PC-3 (cell line): ENCODE measurements at regions of chr20 and their contacts with region 1.

Region 1: DNA sequence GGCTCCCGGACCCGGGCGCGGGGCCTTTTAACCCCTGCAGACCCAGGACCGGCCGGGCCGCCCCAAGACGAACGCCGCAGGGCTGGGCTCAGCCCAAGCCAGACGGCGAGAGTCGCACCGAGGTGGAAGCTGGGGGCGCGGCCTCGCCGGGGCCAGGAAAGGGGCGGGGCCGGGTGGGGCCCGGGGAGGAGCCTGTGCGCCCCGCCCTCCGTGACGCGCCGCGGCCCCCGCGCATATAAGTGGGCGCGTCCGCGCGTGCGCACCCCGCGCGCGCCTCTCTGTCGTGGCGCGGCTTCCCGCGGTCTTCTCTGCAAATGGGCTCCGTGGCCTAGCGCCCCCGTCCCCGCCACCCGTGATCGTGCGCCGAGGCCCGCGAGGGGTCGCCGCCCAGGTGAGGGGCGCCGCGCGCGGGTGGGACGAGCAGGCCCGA is at the start of gene PPDPF:
- DNase-seq: peak; percentile 84
- ATAC-seq: peak; percentile 70
- H3K4me3 ChIP-seq: peak within 1 kb of the TSS; percentile 99
- H3K27ac ChIP-seq: peak within 1 kb of the TSS; percentile 75
- H3K4me1 ChIP-seq: peaks cover 13% of the 10 kb centered on the region
- H3K27me3 ChIP-seq: no peaks in the 10 kb centered on the region
- CTCF ChIP-seq: no peak
- total RNA-seq, gene PPDPF: 245 and 256 TPM in 2 replicates

Region 2: GRCh38 chr20:63044605-63045004 is 475.9 kb before region 1 on chr20:
- CTCF ChIA-PET with region 1: no interaction called
- POLR2A ChIA-PET with region 1: interaction called, 12 read pairs
- intact Hi-C with region 1: no loop called
- DNase-seq: no peak
- ATAC-seq: no peak
- H3K4me3 ChIP-seq: no peak overlapping the region
- H3K27ac ChIP-seq: no peak overlapping the region
- H3K4me1 ChIP-seq: no peaks in the 10 kb centered on the region
- H3K27me3 ChIP-seq: peaks cover 74% of the 10 kb centered on the region
- CTCF ChIP-seq: no peak

Region 3: GRCh38 chr20:63425846-63426485 is 94.6 kb before region 1 on chr20:
- CTCF ChIA-PET with region 1: no interaction called
- POLR2A ChIA-PET with region 1: interaction called, 15 read pairs
- intact Hi-C with region 1: no loop called
- DNase-seq: peak; percentile 18
- ATAC-seq: no peak
- H3K4me3 ChIP-seq: no peak overlapping the region
- H3K27ac ChIP-seq: no peak overlapping the region
- H3K4me1 ChIP-seq: no peaks in the 10 kb centered on the region
- H3K27me3 ChIP-seq: peaks cover 32% of the 10 kb centered on the region
- CTCF ChIP-seq: peak; percentile 28

Region 4: DNA sequence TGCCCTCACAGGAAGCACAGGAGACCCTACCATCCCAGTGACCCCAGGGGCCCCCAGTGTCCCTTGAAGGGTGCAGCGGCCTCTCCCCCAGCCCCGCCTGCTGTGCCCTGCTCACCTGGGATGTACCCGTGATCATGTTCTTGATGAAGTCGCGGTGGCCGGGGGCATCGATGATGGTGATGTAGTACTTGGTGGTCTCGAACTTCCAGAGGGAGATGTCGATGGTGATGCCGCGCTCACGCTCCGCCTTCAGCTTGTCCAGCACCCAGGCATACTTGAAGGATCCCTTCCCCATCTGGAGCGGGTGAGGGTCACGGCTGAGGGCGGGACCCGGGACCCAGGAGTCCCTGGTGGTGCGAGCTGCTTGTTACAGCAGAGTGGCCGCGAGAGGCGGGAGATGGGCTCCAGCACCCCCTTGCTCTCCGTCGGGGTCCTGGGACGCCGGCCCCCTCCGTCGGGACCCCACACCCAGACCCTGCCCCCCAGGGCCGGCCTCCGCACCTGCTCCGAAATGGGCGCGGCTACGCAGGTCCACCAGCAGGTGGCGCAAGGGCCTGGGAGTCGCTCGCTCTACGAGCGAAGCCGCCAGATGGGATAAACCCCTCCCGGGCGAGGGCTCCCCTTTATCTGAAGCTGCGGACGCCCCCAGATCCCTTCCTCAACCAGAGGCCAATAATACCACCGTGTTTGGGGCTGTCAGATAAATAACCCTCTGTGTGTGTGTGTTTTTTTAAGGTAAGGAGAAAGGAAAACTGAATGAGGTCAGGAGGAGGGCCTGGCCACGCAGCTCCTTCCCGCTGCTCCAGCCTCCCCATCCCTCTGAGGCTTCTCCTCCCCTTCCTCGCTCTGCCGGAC is 24.6 kb before region 1 on chr20:
- CTCF ChIA-PET with region 1: interaction called, 21 read pairs
- POLR2A ChIA-PET with region 1: interaction called, 6 read pairs
- intact Hi-C with region 1: no loop called
- DNase-seq: peak; percentile 51
- ATAC-seq: peak; percentile 15
- H3K4me3 ChIP-seq: no peak overlapping the region
- H3K27ac ChIP-seq: no peak overlapping the region
- H3K4me1 ChIP-seq: peaks cover 14% of the 10 kb centered on the region
- H3K27me3 ChIP-seq: no peaks in the 10 kb centered on the region
- CTCF ChIP-seq: peak; percentile 90

Region 5: GRCh38 chr20:63641792-63642544 is 121.4 kb after region 1 on chr20:
- CTCF ChIA-PET with region 1: no interaction called
- POLR2A ChIA-PET with region 1: interaction called, 23 read pairs
- intact Hi-C with region 1: no loop called
- DNase-seq: peak; percentile 92
- ATAC-seq: peak; percentile 72
- H3K4me3 ChIP-seq: peak overlapping the region; percentile 71
- H3K27ac ChIP-seq: peak overlapping the region; percentile 41; the same call in 1 of the 2 replicates
- H3K4me1 ChIP-seq: peaks cover 6% of the 10 kb centered on the region
- H3K27me3 ChIP-seq: no peaks in the 10 kb centered on the region
- CTCF ChIP-seq: peak; percentile 49